Ovary (tissue), 10 donors: ENCODE measurements at regions of chr20 and their contacts with region 1.

Region 1: GRCh38 chr20:61538183-61538770 is 286.2 kb downstream of the CDH4 start:
- DNase-seq: no peak
- H3K4me3 ChIP-seq: no peak overlapping the region
- H3K27ac ChIP-seq: no peak overlapping the region
- H3K4me1 ChIP-seq: no peaks in the 10 kb centered on the region
- H3K27me3 ChIP-seq: no peaks in the 10 kb centered on the region
- CTCF ChIP-seq: no peak
- EP300 ChIP-seq: no peak
- POLR2A ChIP-seq: no peak

Region 2: DNA sequence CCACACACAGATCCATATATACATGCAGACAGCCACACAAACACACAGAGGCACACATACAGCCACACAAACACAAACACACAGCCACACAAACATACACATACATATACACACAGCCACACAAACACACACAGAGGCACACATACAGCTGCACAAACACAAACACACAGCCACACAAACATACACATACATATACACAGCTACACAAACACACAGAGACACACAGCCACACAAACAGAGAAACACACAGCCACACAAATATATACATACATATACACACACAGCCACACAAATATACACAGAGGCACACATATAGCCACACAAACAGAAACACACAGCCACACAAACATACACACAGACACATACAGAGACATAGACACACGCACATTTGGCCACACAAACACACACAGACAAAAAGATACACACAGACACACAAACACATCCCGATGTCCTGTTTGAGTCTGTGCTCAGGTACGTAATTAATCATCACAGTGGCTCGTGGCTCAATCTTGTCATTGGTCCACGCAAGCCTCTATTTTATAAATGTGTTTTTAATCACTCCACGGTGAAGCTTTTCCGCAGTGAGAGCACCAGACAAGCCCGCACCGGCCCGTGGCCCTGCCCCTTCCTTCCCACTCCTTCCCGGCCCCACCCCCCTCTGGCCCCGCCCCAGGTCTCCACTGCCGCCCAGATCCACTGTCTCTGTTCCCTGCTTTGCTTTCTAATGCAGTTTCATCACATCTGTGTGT is 150.9 kb before region 1 on chr20:
- intact Hi-C with region 1: no loop called
- DNase-seq: no peak
- H3K4me3 ChIP-seq: no peak overlapping the region
- H3K27ac ChIP-seq: no peak overlapping the region
- H3K4me1 ChIP-seq: no peaks in the 10 kb centered on the region
- H3K27me3 ChIP-seq: no peaks in the 10 kb centered on the region
- CTCF ChIP-seq: no peak
- EP300 ChIP-seq: no peak
- POLR2A ChIP-seq: no peak

Region 3: DNA sequence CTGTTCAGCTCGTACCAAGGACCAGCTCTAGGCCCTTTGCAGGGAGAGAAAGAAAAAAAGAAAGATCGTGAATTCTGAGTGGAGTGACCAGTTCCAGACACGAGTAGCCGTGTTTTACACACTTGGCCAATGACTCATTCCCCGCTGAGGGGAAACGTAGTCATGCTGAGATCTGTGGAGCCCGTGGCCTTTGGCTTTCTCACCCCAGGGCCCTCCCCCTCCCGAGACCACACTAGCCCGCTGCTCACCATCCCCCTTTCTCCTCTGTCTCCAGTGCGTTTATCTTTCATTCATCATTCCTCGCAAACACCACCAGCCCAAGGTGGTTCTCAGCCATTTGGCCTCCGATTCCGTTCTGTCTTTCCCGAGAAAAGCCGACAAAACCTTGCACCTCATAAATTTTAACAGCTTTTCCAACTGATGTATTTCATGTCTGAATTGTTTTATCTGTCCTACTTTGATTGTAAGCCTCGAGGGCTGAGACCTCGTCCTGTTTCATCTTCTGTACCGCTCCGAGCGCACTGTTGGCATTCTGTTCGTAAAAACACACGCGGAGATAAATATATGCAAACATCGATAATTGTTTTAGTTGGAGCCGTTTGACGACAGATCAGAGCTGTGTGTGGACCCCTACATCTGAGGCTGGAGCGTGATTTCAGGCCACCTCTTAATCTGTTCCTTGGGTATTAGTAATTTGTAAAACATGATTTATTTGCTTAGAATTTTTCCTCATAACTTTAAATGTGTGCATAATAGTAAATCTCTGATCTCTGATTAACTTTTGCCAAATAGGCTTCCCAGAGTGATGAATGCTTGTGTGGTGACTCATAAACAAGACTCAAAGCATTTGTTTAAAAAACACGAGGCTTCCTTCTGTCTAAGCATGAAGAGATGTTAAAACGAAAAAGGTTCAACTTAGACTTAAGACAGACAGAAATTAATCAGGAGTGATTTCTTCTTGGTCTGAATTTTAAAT is 50.4 kb after region 1 on chr20:
- intact Hi-C with region 1: loop called in 1 of 4 experiments (anchors 5 kb)
- DNase-seq: peak in 1 of 5 donors; percentile 19
- H3K4me3 ChIP-seq: no peak overlapping the region
- H3K27ac ChIP-seq: no peak overlapping the region
- H3K4me1 ChIP-seq: peaks cover 6% of the 10 kb centered on the region
- H3K27me3 ChIP-seq: no peaks in the 10 kb centered on the region
- CTCF ChIP-seq: no peak
- EP300 ChIP-seq: no peak
- POLR2A ChIP-seq: no peak